MCF 10A (cell line): ENCODE measurements at regions of chr1 and their contacts with region 1.

Region 1: DNA sequence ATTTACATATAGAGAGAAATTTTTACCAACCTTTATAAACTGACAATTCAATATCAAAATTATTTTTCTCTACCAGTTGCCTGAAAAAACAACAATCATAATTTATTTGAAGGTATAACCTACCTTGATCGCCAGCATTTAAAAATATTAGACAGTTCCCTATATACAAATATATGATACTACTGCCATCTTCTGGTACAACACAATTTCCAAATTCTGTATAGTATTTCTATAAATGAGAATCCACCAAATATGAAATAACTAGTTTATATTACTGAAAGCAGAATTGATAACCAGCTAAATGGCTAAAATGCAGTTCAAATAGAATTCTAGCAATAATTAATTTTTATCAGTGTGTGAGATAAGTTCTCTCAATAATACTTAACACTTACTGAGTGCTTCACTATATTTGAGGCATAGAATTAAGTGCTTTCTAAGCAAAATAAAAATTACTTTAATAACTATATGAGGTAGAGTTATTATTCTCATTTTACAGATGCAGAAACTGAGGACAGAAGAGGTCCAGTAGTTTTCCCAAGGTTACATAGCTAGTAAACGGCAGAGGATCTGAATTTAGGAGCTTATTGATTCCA is 75.6 kb downstream of the PIGK start:
- DNase-seq: peak; percentile 8
- H3K4me3 Mint-ChIP-seq: no peak overlapping the region
- H3K27ac Mint-ChIP-seq: no peak overlapping the region
- H3K4me1 Mint-ChIP-seq: no peaks in the 10 kb centered on the region
- H3K27me3 Mint-ChIP-seq: no peaks in the 10 kb centered on the region
- CTCF ChIP-seq: peak; percentile 36

Region 2: GRCh38 chr1:75908717-75909152 is 1234.9 kb before region 1 on chr1:
- CTCF ChIA-PET with region 1: interaction called, 10 read pairs
- POLR2A ChIA-PET with region 1: no interaction called
- intact Hi-C with region 1: loop called (anchors 2 kb)
- DNase-seq: peak; percentile 72
- H3K4me3 Mint-ChIP-seq: no peak overlapping the region
- H3K27ac Mint-ChIP-seq: no peak overlapping the region
- H3K4me1 Mint-ChIP-seq: no peaks in the 10 kb centered on the region
- H3K27me3 Mint-ChIP-seq: peaks cover 33% of the 10 kb centered on the region
- CTCF ChIP-seq: peak; percentile 63

Region 3: GRCh38 chr1:77416692-77417450 is 273.2 kb after region 1 on chr1:
- CTCF ChIA-PET with region 1: no interaction called
- POLR2A ChIA-PET with region 1: no interaction called
- intact Hi-C with region 1: loop called (anchors 1 kb)
- DNase-seq: peak; percentile 55
- H3K4me3 Mint-ChIP-seq: no peak overlapping the region
- H3K27ac Mint-ChIP-seq: no peak overlapping the region
- H3K4me1 Mint-ChIP-seq: peaks cover 12% of the 10 kb centered on the region
- H3K27me3 Mint-ChIP-seq: peaks cover 21% of the 10 kb centered on the region
- CTCF ChIP-seq: peak; percentile 41